ENCODE measurements at regions of chr3 and their contacts with region 1.

Region 1: DNA sequence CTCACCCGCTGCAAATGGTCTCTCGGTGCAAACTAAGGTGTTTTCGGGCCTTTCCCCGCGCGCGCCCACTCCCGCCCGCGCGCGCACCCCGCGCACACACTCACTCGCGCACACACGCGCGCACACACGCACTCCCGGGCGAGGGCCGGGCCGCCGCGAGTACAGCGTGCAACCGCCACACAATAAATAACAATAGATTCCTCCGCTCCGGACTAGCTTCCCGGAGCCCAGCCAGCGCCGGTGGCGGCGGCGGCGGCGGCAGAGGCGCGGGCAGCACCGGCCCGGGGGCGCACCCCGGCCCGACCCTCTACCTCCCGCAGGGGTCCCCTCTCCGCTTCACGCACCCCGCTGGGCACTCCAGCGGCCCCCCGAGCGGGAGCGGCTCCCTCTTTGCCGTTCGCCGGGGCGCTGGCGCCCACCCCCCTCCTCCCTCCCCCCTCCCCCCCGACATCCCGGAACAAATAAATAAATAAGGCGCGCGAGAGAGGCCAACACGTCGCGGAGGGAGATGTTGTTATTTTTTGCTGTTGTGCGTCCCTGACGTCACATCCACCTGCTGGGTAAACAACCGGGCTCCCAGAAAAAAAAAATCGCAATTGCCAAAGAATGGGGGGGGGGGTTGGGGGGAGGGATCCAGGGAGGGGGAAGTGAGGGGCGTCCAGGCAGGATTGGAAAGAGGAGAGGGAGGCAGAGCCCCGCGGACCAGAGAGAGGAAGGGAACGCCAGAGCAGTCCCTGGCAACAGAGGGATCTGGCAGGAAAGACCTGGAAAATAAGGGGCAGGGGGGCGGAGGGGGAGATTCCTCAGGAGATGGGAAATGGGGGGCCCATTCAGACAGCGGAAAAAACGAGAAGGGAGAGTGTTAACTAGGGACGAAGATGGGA is at the start of gene FOXP1:
- DNase-seq: peak; percentile 80
- H3K4me3 ChIP-seq: peak within 1 kb of the TSS; percentile 76 to 91 (median 84)
- H3K27ac ChIP-seq: peak within 1 kb of the TSS; percentile 78
- H3K4me1 ChIP-seq: peaks cover 41% of the 10 kb centered on the region
- H3K27me3 ChIP-seq: no peaks in the 10 kb centered on the region
- CTCF ChIP-seq: no peak
- POLR2A ChIP-seq: no peak
- total RNA-seq, gene FOXP1: 96.9 and 107 TPM in 2 replicates

Region 2: DNA sequence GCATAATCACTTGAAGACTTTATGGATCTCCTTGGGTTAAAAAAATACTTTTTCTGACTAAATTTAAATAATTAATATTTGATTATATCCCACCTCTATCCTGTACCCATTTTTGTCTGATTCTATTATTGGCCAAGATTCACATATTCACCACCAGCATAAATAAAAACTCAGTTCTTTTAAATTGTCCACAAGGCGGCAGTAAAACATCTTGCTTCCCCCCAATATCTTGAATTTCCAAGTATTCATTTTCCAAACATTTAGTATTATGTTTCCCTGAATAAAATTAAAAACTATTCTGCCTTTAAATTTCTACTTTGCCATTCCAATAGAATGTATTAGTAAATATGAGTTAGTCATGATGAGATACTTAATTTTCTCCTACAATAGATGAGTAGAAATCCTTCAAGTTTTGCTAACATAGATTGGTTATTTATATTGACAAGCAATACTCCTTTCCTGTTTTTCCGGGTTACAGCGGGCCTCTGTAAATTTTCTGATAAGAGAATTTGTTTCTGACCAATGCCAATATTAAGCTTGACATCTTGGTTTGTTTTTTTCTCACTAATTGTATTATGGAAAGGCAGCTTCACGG is 1052.6 kb before region 1 on chr3:
- CTCF ChIA-PET with region 1: interaction called, 8 read pairs
- POLR2A ChIA-PET with region 1: no interaction called
- dilution Hi-C with region 1: no loop called
- intact Hi-C with region 1: loop called (anchors 2 kb)
- DNase-seq: peak; percentile 52
- H3K4me3 ChIP-seq: no peak overlapping the region
- H3K27ac ChIP-seq: no peak overlapping the region
- H3K4me1 ChIP-seq: no peaks in the 10 kb centered on the region
- H3K27me3 ChIP-seq: peaks cover 7 to 9% of the 10 kb centered on the region in 2 experiments
- CTCF ChIP-seq: peak; percentile 7 to 28
- POLR2A ChIP-seq: no peak

Region 3: DNA sequence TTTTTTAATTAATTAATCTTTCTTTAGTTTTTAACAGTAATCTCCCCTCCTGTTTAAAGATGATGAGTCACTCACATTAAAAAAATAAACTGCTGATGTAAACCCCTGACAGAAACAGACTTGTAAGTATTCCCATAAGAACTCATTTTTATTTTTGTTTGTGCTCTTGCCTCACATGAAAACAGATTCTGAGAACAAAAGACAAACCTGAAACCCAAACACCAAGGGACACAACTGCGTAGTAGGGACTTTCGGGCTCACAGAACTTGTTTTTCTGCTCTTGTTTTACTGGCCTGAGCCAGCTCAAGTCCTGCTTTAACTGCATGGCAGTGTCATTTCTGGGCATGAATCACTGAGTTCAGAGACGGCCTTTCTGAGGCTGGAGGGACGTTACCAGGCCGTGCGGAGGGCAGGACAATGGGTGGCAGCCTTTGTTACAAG is 601.1 kb before region 1 on chr3:
- CTCF ChIA-PET with region 1: no interaction called
- POLR2A ChIA-PET with region 1: no interaction called
- dilution Hi-C with region 1: no loop called
- intact Hi-C with region 1: loop called (anchors 2 kb)
- DNase-seq: peak; percentile 97
- H3K4me3 ChIP-seq: no peak overlapping the region
- H3K27ac ChIP-seq: peak overlapping the region; percentile 92
- H3K4me1 ChIP-seq: peaks cover 46% of the 10 kb centered on the region
- H3K27me3 ChIP-seq: no peaks in the 10 kb centered on the region
- CTCF ChIP-seq: no peak
- POLR2A ChIP-seq: peak; percentile 56

Region 4: DNA sequence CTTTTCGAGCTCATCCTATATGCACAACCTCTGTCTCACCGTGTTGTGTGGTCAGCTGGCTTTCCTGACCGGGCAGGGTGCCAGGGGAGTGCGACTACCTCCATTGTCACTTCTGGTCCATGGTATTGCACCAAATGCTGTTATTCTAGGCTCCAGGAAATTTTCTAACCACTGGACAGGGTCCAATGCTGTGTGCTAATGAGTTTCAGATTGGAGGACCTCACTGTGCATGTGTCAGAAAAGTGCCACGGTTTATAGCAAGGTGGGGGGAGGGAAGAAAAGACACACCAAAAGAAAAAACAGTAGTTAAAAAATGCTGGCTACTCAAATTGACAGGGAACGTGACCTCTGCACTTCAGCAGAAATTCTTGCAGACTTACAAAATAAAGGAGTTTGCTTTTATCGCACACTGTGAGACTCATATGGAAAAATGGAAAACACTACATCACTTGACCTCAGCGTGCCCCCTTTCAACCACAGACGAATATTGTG is 480.3 kb before region 1 on chr3:
- CTCF ChIA-PET with region 1: no interaction called
- POLR2A ChIA-PET with region 1: no interaction called
- dilution Hi-C with region 1: no loop called
- intact Hi-C with region 1: loop called (anchors 1 kb)
- DNase-seq: peak; percentile 94
- H3K4me3 ChIP-seq: no peak overlapping the region
- H3K27ac ChIP-seq: peak overlapping the region; percentile 92
- H3K4me1 ChIP-seq: peaks cover 65% of the 10 kb centered on the region
- H3K27me3 ChIP-seq: no peaks in the 10 kb centered on the region
- CTCF ChIP-seq: no peak
- POLR2A ChIP-seq: no peak

Region 5: GRCh38 chr3:71247221-71247976 is 336.4 kb before region 1 on chr3:
- CTCF ChIA-PET with region 1: no interaction called
- POLR2A ChIA-PET with region 1: no interaction called
- dilution Hi-C with region 1: no loop called
- intact Hi-C with region 1: loop called (anchors 5 kb)
- DNase-seq: no peak
- H3K4me3 ChIP-seq: no peak overlapping the region
- H3K27ac ChIP-seq: no peak overlapping the region
- H3K4me1 ChIP-seq: peaks cover 34% of the 10 kb centered on the region
- H3K27me3 ChIP-seq: no peaks in the 10 kb centered on the region
- CTCF ChIP-seq: no peak
- POLR2A ChIP-seq: no peak

Region 6: DNA sequence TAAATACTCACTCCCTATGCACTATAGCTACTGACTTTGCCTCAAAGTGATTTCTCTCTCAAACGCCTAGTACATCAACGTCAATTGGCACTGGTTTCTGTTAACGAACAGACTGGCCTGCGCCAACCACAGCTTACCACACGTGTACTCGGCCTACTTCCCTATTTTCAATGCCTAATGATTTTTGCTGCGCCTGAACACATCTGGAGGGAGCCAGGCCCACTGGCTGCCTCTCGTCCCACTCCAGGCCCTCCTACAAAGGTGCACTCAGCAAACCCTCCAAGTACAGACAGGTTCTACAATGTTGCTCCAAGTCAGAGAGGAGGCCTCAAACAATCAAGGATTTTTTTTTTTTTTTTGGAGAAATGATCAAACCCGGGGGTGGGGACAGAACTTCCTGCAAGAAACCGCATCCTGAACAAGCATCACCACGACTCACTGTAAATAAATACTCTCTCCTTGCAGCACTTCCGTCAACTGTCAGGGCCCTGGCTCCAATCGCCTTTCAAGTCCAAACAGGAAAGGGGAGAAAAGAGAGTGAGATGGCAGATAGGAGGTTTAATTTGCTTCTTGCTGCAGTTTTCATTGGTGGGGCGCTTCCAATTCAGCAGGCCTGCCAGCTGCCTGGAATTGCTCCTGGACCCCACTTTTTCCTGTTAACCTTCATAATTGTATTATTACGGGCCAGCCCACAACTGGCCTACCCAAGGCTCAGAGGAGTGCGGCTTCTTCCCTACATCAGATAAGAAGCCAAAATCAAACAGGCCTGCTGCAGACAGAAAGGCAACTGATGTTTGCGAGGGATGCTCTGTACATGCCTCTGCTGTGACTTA is 139.6 kb before region 1 on chr3:
- CTCF ChIA-PET with region 1: no interaction called
- POLR2A ChIA-PET with region 1: no interaction called
- dilution Hi-C with region 1: no loop called
- intact Hi-C with region 1: loop called (anchors 1 kb)
- DNase-seq: peak; percentile 85
- H3K4me3 ChIP-seq: no peak overlapping the region
- H3K27ac ChIP-seq: peak overlapping the region; percentile 65
- H3K4me1 ChIP-seq: peaks cover 20% of the 10 kb centered on the region
- H3K27me3 ChIP-seq: no peaks in the 10 kb centered on the region
- CTCF ChIP-seq: no peak
- POLR2A ChIP-seq: no peak

Region 7: DNA sequence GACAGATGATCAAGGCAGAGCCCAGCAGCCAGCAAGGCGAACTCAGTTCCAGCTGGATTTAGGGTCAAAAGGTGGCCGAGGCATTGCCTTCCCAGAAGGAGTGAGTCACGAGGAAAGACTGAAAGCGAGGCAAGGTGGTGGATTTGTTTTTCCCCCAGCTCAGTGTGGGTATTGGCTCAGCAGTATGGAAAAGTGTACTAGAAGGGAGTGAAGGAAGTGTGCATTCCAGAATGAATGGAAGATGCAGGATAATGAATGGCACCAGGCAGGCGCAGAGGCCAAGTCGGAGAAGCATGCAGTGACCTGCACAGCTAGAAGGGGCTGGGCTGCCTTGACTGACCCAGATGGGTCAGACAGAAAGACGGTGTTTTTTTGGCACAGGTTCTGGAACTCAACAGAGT is 46.6 kb before region 1 on chr3:
- CTCF ChIA-PET with region 1: interaction called, 5 read pairs
- POLR2A ChIA-PET with region 1: no interaction called
- dilution Hi-C with region 1: no loop called
- intact Hi-C with region 1: loop called (anchors 1 kb)
- DNase-seq: peak; percentile 98
- H3K4me3 ChIP-seq: no peak overlapping the region
- H3K27ac ChIP-seq: peak overlapping the region; percentile 60
- H3K4me1 ChIP-seq: peaks cover 56% of the 10 kb centered on the region
- H3K27me3 ChIP-seq: no peaks in the 10 kb centered on the region
- CTCF ChIP-seq: no peak
- POLR2A ChIP-seq: no peak

Region 8: GRCh38 chr3:71725279-71725991 is 141.6 kb after region 1 on chr3 and contains the start of gene EIF4E3:
- CTCF ChIA-PET with region 1: no interaction called
- POLR2A ChIA-PET with region 1: no interaction called
- dilution Hi-C with region 1: no loop called
- intact Hi-C with region 1: no loop called
- DNase-seq: no peak
- H3K4me3 ChIP-seq: peak within 1 kb of the TSS; percentile 6 to 54 (median 43)
- H3K27ac ChIP-seq: no peak within 1 kb of the TSS
- H3K4me1 ChIP-seq: peaks cover 5% of the 10 kb centered on the region
- H3K27me3 ChIP-seq: peaks cover 22 to 29% of the 10 kb centered on the region in 2 experiments
- CTCF ChIP-seq: no peak
- POLR2A ChIP-seq: no peak
- total RNA-seq, gene EIF4E3: 4.9 and 7.6 TPM in 2 replicates

Measured in endothelial cell of umbilical vein (primary cell).